ENCODE measurements at regions of chr16 and their contacts with region 1.

Region 1: DNA sequence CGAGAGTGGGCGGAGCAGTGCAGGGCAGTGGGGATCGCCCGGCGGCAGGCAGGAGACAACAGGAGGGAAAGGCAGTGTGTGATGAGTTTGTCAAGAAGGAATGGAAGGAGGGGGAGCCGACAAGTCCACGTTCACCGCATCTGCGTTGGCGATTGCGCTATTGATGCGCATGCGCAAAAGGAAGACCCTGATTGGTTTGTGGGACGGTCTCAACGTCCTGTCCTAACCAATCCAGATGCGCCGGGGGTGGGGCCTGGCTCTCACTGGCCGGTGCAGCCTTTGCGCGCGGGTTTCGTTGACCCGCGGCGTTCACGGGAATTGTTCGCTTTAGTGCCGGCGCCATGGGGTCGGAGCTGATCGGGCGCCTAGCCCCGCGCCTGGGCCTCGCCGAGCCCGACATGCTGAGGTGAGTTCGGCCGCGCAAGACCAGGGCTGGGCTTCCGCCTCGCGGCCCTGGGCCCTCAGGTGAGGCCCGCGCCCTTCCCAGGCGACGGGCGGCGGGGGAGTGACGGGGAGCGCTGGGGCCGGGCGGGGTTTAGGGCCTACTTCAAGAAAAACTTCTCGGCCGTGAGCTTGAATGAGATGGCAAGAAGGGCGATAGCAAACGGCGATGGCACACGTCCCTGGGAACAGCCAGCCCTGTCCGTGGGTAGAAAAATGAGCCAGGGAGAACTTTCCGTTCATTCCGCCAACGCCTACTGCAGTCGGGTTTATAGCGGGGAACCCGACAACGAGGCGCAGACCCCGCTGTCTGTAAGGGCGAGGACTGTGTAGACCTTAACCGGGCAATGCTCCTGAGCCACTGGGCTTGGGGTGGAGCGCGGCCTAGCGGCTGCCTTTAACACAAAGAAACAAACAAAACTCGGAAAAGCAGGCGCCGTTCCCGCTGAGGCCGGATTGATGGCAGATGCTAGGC is at the start of gene ORC6:
- DNase-seq: peak; percentile 98
- H3K4me3 Mint-ChIP-seq: no peak within 1 kb of the TSS
- H3K27ac Mint-ChIP-seq: peak within 1 kb of the TSS; percentile 64
- H3K4me1 Mint-ChIP-seq: peaks cover 47% of the 10 kb centered on the region
- H3K27me3 Mint-ChIP-seq: no peaks in the 10 kb centered on the region
- total RNA-seq, gene ORC6: 57.7 to 61.9 TPM

Region 2: DNA sequence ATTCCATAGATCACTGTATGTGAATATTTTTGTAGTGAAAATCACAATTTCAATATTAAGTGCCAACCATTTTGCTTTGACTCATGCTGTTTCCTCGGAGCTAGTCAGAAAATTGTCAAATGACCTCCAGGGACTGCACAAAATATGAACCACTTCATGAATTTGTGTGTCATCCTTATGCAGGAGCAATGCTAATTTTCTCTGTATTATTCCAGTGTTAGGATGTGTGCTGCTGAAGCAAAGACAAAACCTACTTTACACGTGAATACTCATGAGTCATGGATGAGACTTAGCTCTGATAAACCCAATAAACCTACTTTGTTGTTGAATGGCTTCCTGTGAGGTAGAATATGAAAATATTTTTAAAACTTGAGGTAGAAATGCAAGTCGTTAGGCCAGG is 133.7 kb before region 1 on chr16:
- CTCF ChIA-PET with region 1: interaction called, 3 read pairs
- intact Hi-C with region 1: loop called (anchors 1 kb)
- DNase-seq: no peak
- H3K4me3 Mint-ChIP-seq: no peak overlapping the region
- H3K27ac Mint-ChIP-seq: no peak overlapping the region
- H3K4me1 Mint-ChIP-seq: no peaks in the 10 kb centered on the region
- H3K27me3 Mint-ChIP-seq: peaks cover 16% of the 10 kb centered on the region

Region 3: GRCh38 chr16:46673320-46674013 is 16.2 kb before region 1 on chr16:
- CTCF ChIA-PET with region 1: interaction called, 22 read pairs
- intact Hi-C with region 1: no loop called
- DNase-seq: peak; percentile 66
- H3K4me3 Mint-ChIP-seq: no peak overlapping the region
- H3K27ac Mint-ChIP-seq: no peak overlapping the region
- H3K4me1 Mint-ChIP-seq: no peaks in the 10 kb centered on the region
- H3K27me3 Mint-ChIP-seq: no peaks in the 10 kb centered on the region

Region 4: GRCh38 chr16:46709469-46710005 is 19.9 kb after region 1 on chr16:
- CTCF ChIA-PET with region 1: no interaction called
- intact Hi-C with region 1: no loop called
- DNase-seq: no peak
- H3K4me3 Mint-ChIP-seq: no peak overlapping the region
- H3K27ac Mint-ChIP-seq: no peak overlapping the region
- H3K4me1 Mint-ChIP-seq: no peaks in the 10 kb centered on the region
- H3K27me3 Mint-ChIP-seq: no peaks in the 10 kb centered on the region

Region 5: DNA sequence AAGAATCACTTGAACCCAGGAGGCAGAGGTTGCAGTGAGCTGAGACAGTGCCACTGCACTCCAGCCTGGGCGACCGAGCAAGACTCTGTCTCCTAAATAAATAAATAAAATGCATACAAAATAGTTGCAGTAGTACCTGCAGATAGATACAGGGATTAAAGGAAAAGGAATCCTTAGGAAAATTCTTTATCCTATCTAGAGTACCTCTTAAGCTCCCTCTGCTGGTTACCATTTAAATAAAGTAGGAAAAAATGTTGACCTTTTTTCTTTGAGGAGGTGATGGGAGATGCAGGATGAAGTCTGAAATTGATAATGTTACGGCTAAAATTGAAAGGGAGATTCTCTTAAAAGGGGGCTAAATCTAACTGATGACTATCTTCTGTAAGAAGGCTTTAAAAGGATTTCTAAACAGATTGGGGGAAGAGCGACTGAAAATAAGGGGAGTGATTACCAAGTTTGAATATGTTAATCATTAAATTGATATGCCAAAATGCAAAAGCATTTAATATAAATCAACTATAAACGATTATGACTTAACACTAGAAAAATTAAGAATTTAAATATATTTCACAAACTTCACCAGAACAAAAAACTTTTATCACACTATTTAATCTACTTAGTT is 111.9 kb after region 1 on chr16:
- CTCF ChIA-PET with region 1: no interaction called
- intact Hi-C with region 1: no loop called
- DNase-seq: no peak
- H3K4me3 Mint-ChIP-seq: no peak overlapping the region
- H3K27ac Mint-ChIP-seq: no peak overlapping the region
- H3K4me1 Mint-ChIP-seq: peaks cover 19% of the 10 kb centered on the region
- H3K27me3 Mint-ChIP-seq: no peaks in the 10 kb centered on the region

Region 6: DNA sequence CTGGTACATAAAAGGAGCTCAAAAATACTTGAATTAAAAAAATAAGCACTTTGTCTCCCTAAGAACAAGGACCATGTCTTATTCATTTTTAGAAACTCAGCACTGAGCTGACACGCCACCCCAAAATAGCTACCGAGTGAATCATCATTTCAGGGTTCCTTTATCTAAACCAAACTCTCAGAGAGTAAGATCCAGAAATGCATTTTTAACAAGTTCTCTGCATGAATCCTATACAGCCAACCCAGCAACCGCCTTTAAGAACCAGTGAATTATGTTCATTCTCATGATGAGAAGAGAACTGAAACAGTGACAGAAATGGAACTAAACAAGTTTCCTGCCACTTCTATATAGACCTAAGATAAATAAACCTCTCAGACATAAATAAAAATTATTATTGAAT is 132.6 kb after region 1 on chr16:
- CTCF ChIA-PET with region 1: no interaction called
- intact Hi-C with region 1: loop called (anchors 2 kb)
- DNase-seq: peak; percentile 74
- H3K4me3 Mint-ChIP-seq: no peak overlapping the region
- H3K27ac Mint-ChIP-seq: no peak overlapping the region
- H3K4me1 Mint-ChIP-seq: peaks cover 30% of the 10 kb centered on the region
- H3K27me3 Mint-ChIP-seq: no peaks in the 10 kb centered on the region

Region 7: DNA sequence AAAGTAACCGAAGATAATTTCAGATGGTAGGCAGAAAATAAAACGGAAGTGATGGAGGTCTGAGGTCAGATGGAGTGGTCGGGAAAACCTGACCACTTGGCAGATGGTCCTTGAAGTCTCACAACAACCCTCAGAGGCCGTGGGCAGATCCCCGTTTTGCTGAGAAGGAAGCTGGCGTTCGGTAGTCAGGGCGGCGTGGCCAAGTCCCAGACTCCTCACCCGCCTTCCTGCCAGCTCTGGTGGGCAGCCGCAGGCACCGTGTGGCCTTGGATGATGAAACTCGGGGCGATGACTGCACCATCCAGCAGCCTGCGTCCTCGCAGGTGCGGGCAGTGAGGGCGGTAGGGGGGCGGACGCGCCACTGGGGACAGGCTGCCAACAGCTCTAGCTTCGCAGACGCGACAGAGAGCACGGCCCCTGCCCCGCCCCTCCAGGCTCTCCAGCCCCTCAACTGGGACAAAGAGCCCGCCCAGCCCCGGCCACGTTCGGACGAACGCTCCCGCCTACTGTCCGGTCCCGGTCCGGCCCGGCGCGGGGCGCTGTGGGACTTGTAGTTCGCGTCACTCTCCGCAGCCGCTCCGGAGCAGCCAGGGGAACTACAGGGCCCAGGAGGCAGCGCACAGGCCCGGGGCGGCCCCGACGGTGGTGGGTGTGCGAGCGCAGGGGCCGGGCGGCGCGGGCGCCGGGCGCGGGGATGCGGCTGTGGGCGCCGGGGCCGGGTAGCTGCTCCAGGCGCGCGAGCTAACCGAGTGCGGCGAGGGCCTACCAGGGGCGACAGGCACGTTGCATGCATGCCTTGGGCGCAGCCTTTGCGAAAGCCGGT is 194.3 kb after region 1 on chr16 and contains the start of gene GPT2:
- CTCF ChIA-PET with region 1: no interaction called
- intact Hi-C with region 1: loop called (anchors 1 kb)
- DNase-seq: peak; percentile 80
- H3K4me3 Mint-ChIP-seq: peak within 1 kb of the TSS; percentile 78
- H3K27ac Mint-ChIP-seq: peak within 1 kb of the TSS; percentile 68
- H3K4me1 Mint-ChIP-seq: peaks cover 9% of the 10 kb centered on the region
- H3K27me3 Mint-ChIP-seq: peaks cover 19% of the 10 kb centered on the region
- total RNA-seq, gene GPT2: 15.5 to 18.6 TPM

Region 8: DNA sequence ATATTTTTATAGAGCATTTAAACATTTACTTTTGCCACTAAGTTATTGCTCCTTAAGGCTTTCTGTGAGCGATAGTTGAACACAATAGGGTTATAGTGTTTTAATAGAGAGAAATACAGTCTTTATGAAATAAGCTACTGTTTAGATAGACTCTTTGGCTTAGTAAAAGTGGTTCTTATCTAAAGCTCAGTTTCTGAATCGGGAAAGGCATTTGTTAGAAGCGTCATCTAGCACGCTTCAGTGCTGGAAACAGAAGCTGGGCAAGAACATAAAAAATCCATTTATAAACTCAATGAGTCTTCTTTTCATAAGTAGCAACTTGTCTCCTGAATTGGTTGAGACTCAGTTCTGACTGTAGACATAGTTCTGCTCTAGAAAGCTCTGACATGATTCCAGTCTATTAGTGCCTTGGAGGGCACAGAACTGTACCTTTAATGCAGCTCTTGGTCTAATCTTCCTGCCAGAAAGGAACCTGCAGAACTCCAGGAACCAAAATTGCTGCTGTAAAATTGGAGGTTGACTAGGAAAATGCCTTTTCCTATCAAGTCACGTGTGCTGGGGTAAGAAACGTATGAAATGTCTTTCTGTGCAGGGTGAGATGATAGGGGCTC is 339.2 kb after region 1 on chr16:
- CTCF ChIA-PET with region 1: no interaction called
- intact Hi-C with region 1: no loop called
- DNase-seq: no peak
- H3K4me3 Mint-ChIP-seq: no peak overlapping the region
- H3K27ac Mint-ChIP-seq: no peak overlapping the region
- H3K4me1 Mint-ChIP-seq: no peaks in the 10 kb centered on the region
- H3K27me3 Mint-ChIP-seq: no peaks in the 10 kb centered on the region

Region 9: DNA sequence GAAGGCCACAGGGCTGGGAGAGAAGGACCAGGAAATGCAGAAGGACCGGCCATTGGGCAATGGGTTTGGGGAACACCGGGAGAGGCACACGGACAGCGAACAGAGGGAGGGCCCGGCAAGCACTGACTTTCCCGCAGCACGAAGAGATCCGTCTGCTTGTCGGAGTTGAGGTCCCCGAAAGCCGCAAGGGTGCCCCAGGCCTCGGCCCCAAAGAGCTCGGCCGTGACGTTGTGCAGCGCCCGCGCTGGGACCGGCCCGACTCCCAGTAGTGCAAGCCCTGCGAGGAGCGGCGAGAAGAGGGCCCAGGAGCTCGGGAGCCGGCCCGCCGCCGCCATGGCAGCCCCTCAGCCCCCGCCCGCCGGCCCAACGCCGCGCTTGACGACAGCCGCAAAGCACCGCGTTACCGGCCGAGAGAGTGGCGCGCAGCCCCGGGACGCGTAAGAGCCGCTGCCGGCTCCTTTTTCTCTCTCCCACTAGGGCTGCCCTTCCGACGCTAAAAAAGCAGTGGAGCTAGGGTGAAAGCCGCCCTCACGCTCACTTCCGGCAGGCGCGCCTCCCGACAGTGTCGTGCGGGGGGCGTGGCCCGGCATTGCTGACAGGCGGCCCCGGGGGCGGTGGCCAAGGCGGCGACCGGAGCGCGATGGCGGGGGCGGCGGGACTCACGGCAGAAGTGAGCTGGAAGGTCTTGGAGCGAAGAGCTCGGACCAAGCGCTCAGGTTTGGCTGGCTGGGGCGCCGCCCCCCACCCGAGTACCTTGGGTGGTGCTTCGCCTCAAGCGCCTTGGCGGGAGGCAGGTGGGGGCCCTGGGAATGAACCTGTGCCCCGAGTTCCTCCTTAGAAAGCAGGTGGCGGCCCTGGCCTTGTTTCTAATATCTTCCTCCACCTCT is 771.3 kb after region 1 on chr16 and contains the starts of genes ITFG1 and PHKB:
- CTCF ChIA-PET with region 1: no interaction called
- intact Hi-C with region 1: loop called (anchors 10 kb)
- DNase-seq: peak; percentile 93
- H3K4me3 Mint-ChIP-seq: peak within 1 kb of the TSS; percentile 92
- H3K27ac Mint-ChIP-seq: peak within 1 kb of the TSS; percentile 88
- H3K4me1 Mint-ChIP-seq: peaks cover 58% of the 10 kb centered on the region
- H3K27me3 Mint-ChIP-seq: no peaks in the 10 kb centered on the region
- total RNA-seq, gene ITFG1: 17.6 to 18.3 TPM
- total RNA-seq, gene PHKB: 22.5 to 25.3 TPM